PC-9 (cell line): ENCODE measurements at regions of chr18 and their contacts with region 1.

Region 1: GRCh38 chr18:79644006-79644665 is 35.5 kb upstream of the CTDP1 start:
- DNase-seq: peak; percentile 48 to 53
- H3K4me3 ChIP-seq: no peak overlapping the region
- H3K27ac ChIP-seq: no peak overlapping the region
- H3K4me1 ChIP-seq: no peaks in the 10 kb centered on the region
- H3K27me3 ChIP-seq: peaks cover 70% of the 10 kb centered on the region
- CTCF ChIP-seq: peak; percentile 97

Region 2: DNA sequence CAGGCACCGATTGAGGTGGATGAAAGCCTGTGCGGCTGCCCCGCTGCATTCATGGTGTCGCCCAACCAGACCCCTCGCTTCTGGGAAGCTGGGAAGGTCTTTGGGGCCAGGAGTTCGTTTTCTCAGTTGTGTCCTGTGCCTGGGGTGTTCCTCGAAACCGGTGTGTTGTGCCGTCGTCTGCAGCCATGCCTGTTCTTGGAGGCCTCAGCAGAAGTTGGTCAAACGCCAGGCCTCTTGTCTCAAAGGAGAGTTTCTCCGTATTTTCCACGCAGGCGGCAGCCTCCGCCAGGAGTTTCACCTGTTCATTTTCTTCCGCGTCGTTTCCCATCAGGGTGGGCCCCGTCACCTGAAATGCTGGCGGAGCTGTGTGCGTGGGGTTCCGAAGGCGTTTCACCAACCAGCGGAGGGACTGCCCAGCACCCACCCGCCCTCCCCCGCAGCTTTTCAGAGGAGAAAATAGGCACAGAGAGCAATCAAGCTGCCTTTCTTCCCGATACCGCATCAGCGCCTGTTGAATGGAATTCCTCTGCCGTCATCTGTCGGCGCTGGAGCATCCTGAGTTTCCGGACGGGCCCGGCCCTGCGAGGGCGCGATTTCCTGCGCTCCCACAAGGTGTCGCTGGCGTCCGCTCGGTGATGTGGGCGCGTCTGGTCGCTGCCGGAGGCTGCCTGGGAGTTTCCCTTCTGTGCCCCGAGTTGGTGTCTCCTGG is 265.4 kb before region 1 on chr18:
- CTCF ChIA-PET with region 1: no interaction called
- POLR2A ChIA-PET with region 1: no interaction called
- intact Hi-C with region 1: loop called (anchors 1 kb)
- DNase-seq: peak in 1 of 2 experiments; percentile 70
- H3K4me3 ChIP-seq: no peak overlapping the region
- H3K27ac ChIP-seq: no peak overlapping the region
- H3K4me1 ChIP-seq: no peaks in the 10 kb centered on the region
- H3K27me3 ChIP-seq: peaks cover 20% of the 10 kb centered on the region
- CTCF ChIP-seq: peak; percentile 90

Region 3: GRCh38 chr18:79528846-79529245 is 115.3 kb before region 1 on chr18:
- CTCF ChIA-PET with region 1: no interaction called
- POLR2A ChIA-PET with region 1: no interaction called
- intact Hi-C with region 1: loop called (anchors 10 kb)
- DNase-seq: peak; percentile 43 to 60
- H3K4me3 ChIP-seq: no peak overlapping the region
- H3K27ac ChIP-seq: no peak overlapping the region
- H3K4me1 ChIP-seq: no peaks in the 10 kb centered on the region
- H3K27me3 ChIP-seq: peaks cover 66% of the 10 kb centered on the region
- CTCF ChIP-seq: peak; percentile 86

Region 4: DNA sequence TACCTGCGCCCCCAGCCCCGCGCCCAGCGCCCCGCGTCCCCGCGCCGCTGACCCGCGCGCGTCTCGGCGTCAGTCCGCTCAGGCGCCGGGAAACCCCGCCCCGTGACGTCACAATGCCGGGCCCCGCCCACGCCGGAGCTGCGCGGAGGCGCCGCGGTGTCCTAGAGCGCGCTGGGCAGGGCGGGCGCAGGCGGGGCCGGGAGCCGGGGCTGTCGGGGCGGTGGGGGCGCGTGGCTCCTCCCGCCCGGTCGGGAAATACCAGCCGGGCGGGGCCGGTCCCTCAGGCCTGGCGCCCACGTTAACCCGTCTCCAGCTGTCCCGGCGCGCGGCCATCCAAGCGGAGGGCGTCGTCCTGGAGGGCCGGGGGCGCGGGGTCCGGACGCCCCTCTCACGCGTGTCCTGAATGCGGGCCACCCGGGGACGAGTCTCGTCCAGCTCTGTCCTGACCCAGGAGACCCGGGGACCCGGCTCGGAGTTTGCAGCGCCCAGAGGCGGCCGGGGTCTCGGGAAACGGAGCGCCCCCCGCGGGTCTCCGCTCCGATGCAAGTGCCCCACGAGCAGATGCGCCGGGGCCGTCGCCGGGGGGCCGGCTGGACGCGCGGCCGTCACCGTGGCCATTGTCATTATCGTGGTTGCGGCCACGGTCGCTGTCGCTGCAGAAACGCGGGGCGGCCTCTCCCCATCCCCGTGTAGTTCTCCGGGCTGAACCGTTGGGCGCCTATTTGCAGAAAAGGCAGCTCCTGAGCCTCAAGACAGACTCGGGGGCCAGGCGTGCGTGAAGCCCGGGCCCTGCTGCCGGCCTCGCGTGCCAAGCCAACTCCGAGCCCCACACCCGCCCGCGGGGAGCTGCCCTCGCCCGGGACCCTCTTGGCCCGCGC is 307.7 kb after region 1 on chr18 and contains the start of gene SLC66A2:
- CTCF ChIA-PET with region 1: no interaction called
- POLR2A ChIA-PET with region 1: interaction called, 19 read pairs
- intact Hi-C with region 1: no loop called
- DNase-seq: peak; percentile 52 to 82
- H3K4me3 ChIP-seq: peak within 1 kb of the TSS; percentile 69
- H3K27ac ChIP-seq: no peak within 1 kb of the TSS
- H3K4me1 ChIP-seq: peaks cover 11% of the 10 kb centered on the region; the same call in 1 of the 2 replicates
- H3K27me3 ChIP-seq: no peaks in the 10 kb centered on the region
- CTCF ChIP-seq: no peak
- total RNA-seq, gene SLC66A2: 24.3 and 28.0 TPM in 2 replicates